ENCODE measurements at regions of chr20 and their contacts with region 1.

Region 1: DNA sequence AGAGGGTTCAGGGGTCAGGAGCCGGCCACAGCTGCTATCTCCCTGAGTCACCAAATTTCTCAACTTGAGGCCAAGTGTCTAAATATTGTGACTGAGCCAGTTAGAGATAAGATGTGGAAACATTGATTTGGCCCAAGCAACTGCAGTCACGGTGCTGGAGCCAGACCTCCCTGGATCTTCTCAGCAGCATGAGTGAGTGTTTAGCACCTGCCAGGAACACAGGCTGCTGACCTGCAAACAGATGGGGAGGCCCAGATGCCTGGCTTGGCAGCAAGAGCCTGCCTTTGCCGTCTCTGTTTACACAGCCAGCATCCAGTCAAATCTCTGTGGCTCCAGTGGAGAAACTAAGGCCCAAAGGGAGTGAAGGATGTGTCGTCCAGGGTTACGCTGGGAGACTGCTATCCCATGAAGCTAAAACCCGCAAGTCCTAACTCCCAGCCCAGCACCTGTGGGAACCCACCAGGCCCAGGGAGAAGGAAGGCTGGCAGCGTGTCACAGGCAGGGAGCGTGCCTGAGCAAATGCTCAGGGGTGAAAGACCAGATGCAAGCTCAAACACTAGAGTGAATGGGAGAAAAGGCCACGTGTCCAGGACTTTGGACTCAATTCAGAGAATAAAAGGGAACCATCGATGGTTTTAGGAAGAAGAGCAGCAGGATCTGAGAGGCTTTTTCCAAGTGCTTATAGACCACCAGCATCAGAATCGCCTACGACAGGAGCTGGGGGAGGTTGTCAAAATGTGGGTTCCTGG is 15.9 kb upstream of the PTGIS start:
- DNase-seq: peak; percentile 8
- H3K4me3 ChIP-seq: no peak overlapping the region
- H3K27ac ChIP-seq: no peak overlapping the region
- H3K4me1 ChIP-seq: no peaks in the 10 kb centered on the region
- H3K27me3 ChIP-seq: peaks cover 3% of the 10 kb centered on the region
- CTCF ChIP-seq: no peak

Region 2: GRCh38 chr20:49306526-49307278 is 277.1 kb before region 1 on chr20:
- CTCF ChIA-PET with region 1: no interaction called
- dilution Hi-C with region 1: loop called (anchors 5 kb)
- in situ Hi-C with region 1: no loop called
- intact Hi-C with region 1: no loop called
- DNase-seq: no peak
- H3K4me3 ChIP-seq: no peak overlapping the region
- H3K27ac ChIP-seq: no peak overlapping the region
- H3K4me1 ChIP-seq: no peaks in the 10 kb centered on the region
- H3K27me3 ChIP-seq: no peaks in the 10 kb centered on the region
- CTCF ChIP-seq: no peak

Region 3: GRCh38 chr20:49490702-49491110 is 93.1 kb before region 1 on chr20:
- CTCF ChIA-PET with region 1: no interaction called
- dilution Hi-C with region 1: loop called (anchors 5 kb)
- in situ Hi-C with region 1: no loop called
- intact Hi-C with region 1: no loop called
- DNase-seq: no peak
- H3K4me3 ChIP-seq: no peak overlapping the region
- H3K27ac ChIP-seq: no peak overlapping the region
- H3K4me1 ChIP-seq: no peaks in the 10 kb centered on the region
- H3K27me3 ChIP-seq: no peaks in the 10 kb centered on the region
- CTCF ChIP-seq: no peak

Measured in mammary epithelial cell (primary cell).